Right ventricle myocardium inferior (tissue), 1 donor: ENCODE measurements at regions of chr22 and their contacts with region 1.

Region 1: GRCh38 chr22:37817705-37818408 is 5.3 kb upstream of the GALR3 start:
- DNase-seq: peak; percentile 90
- ATAC-seq: peak; percentile 95

Region 2: DNA sequence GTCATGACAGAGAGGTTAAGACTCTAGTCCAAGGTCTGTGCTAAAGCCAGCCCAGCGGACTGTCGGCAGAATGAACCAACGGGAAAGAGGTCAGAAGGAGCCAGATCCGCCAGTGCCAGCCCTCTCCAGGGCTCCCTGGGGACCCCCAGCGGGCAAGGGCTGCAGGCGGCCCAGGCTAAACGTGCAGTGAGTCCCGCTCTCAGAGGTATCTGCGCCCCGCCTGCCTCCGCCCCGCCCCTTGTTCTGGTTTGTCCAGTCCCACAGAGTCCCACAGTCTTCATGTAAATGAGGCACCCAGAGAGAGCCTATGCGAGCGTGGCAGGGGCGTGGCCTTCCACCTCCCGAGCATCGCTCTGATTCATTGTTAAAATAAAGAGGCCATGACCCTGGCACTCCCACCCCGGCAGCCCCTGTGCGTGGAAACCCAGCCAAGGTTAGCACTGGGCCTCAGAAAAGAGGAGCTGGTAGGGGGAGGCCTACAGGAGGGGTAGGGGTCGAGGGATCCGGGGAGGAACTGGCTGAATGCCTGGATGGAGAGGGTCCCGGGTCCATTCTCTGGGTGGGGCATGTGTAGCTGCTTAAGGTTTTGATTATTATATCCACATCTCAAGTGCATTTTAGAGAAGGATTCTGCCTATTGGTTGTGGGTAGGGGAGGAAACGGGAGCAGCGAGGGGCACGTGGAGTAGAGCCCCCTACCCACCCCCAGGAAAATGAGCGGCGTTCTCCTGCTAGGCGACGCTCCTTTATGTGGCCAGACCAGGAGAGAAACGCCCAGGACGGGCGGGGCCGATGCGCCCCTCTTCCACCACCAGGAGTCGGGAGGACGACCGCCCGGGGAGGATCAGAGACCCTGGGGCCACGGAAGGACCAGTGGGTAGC is 121.0 kb before region 1 on chr22 and contains the start of gene TRIOBP:
- intact Hi-C with region 1: no loop called
- DNase-seq: peak; percentile 98
- ATAC-seq: peak; percentile 99
- total RNA-seq, gene TRIOBP: 90.1 TPM

Region 3: DNA sequence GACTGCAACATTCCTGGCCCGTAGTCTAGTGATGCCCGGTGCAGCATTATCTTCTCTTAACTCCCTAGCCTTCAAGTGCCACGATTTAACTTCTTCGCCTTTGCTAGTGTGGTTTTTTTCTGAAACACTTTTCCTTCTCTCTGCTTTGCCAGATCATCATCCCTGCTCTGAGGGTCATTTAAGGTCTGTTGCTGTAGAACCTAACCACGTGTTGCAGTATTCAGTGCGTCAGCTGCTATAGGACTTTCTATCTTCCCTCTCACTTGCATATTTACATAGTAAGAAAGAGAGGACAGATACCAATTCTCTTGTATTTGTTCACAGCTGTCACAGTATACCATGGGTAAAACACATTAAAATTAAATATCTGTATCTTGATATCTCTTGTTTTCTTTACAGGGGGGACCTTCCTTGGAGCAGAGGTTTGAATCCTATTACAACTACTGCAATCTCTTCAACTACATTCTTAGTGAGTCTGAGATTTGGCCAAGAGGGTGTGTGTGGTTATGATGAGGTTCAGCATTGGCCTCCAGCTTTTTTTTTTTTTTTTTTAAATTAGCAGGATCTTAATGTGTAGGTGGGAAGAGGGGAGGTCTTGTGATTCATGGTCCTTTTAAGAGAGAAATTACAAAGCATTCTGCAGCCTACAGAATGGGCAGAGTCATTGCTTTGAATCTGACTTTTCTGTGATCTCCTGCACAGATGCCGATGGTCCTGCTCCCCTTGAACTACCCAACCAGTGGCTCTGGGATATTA is 44.9 kb after region 1 on chr22:
- intact Hi-C with region 1: loop called (anchors 1 kb)
- DNase-seq: no peak
- ATAC-seq: peak; percentile 38

Region 4: DNA sequence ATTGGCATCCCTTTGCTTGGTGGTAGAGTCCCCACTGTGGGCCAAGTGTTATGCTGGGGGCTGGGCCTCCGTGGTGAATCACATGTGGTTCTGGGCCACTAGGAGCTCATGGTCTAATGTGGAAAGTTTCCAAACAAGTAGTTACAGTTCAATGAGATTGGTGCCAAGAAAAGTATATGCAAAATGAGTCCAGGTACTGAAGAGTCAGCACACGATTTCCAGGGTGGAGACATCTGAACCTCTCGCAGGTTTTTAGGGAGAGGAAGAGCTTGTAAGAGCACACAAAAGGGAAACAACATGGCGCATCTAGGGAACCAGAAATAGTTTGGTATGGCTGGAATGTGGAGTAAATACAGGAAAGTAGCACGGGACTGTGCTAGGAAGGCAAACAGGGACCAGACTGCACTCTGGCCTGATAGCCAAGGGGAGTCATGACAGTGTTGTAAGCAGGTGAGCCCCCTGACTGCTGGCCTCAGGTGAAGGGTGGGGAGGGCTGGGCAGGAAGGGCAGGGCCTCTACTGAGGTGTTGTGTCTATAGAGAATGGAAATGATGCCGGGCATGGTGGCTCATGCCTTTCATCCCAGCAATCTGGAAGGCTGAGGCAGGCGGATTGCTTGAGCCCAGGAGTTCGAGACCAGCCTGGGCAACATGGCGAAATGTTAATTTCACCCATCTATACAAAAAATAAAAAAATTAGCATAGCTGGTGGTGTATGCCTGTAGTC is 148.2 kb after region 1 on chr22:
- intact Hi-C with region 1: loop called (anchors 2 kb)
- DNase-seq: no peak
- ATAC-seq: peak; percentile 54

Region 5: DNA sequence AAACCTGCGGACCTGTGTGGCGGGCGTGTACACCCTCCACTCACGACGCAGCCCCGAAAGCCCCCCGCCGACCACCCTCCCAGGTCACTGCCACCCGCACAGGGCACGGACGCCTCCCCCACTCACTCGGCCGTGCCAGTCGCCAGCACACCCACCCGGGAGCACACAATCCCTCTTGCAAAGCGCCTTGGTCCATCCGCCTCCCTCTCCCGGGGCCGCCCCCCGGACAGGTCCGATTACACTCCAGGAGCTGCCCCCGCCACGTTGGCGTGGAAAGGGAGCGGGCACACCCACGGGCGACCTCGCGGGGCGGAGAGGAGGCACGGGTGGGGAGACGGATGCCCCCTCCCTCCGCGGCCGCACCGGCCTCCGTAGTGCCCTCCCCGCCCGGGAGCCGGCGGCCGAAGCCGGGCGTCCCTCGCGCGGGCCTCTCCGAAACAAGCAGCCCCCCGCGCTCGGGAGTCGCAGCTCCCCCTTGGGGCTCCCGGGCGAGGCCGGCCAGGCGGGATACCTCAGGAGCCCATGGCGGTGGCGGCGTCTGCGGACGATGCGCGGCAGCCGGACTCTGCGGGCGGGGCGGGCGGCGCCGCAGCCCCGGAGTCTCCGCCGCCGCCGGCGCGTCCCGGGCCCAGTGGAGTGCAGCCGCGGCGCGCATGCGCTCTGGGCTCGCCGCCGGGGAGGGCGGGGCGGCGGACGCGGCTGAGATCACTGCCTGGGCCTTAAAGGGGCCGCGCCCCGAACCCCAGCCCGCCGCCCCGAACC is 454.7 kb after region 1 on chr22 and contains the start of gene TMEM184B:
- intact Hi-C with region 1: no loop called
- DNase-seq: peak; percentile 93
- ATAC-seq: peak; percentile 95
- total RNA-seq, gene TMEM184B: 43.1 TPM